Calu3 (cell line): ENCODE measurements at regions of chr1 and their contacts with region 1.

Region 1: DNA sequence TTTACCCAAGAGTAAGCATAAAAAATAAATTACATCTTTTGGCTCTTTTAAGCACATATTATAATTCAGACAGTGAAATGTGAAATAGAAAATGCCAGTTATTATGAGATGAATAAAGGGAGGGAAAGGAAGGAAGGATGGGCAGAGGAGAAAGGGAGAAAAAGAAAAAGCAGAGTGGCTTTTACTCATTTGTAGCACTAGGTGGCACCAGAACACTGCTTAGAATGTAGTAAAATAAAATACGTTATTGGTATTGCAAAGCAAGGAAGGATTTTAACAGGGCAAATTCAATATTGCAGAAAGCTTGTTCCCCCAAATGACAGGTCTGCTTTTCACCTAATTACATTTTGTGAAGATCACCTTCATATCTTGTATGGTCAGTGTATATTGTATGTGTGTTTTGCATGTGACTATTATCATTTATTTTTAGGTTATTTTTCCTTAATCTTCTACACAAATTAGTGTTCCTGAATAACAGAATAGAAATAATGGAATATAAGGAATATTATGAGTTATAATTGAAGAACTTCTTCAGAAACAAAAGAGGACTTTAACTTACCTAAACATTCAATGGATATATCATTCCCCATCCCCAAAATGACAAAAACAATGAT is 9.1 kb upstream of the PCNX2 start:
- DNase-seq: no peak
- H3K4me3 Mint-ChIP-seq: no peak overlapping the region
- H3K27ac Mint-ChIP-seq: no peak overlapping the region
- H3K4me1 Mint-ChIP-seq: peaks cover 8% of the 10 kb centered on the region
- H3K27me3 Mint-ChIP-seq: no peaks in the 10 kb centered on the region
- CTCF ChIP-seq: peak; percentile 67

Region 2: DNA sequence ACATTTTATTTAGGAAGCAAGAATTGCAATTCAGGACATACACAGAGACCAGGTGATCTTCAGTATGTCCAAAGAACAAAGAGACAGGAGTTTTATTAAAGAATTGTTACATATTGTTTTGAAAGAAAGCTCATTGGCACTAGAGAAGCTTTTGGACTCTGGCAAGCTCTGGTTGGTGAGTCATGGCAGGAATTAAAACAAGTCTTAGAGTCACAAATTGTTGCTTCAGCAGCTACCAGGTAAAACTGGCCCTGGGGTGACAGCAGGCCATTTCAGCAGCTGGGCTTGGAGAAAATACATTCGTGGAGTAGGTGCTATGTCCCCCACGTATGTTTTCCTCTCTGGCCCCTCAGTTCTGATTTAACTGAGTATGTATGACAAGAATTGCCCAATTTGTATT is 81.7 kb after region 1 on chr1:
- CTCF ChIA-PET with region 1: no interaction called
- intact Hi-C with region 1: loop called (anchors 2 kb)
- DNase-seq: no peak
- H3K4me3 Mint-ChIP-seq: no peak overlapping the region
- H3K27ac Mint-ChIP-seq: no peak overlapping the region
- H3K4me1 Mint-ChIP-seq: peaks cover 4% of the 10 kb centered on the region
- H3K27me3 Mint-ChIP-seq: no peaks in the 10 kb centered on the region
- CTCF ChIP-seq: no peak

Region 3: GRCh38 chr1:234065794-234066447 is 761.3 kb after region 1 on chr1:
- CTCF ChIA-PET with region 1: no interaction called
- intact Hi-C with region 1: loop called (anchors 2 kb)
- DNase-seq: peak; percentile 88
- H3K4me3 Mint-ChIP-seq: no peak overlapping the region
- H3K27ac Mint-ChIP-seq: no peak overlapping the region
- H3K4me1 Mint-ChIP-seq: no peaks in the 10 kb centered on the region
- H3K27me3 Mint-ChIP-seq: no peaks in the 10 kb centered on the region
- CTCF ChIP-seq: peak; percentile 91

Region 4: GRCh38 chr1:234114648-234115307 is 810.2 kb after region 1 on chr1:
- CTCF ChIA-PET with region 1: no interaction called
- intact Hi-C with region 1: loop called (anchors 5 kb)
- DNase-seq: peak; percentile 28
- H3K4me3 Mint-ChIP-seq: peak overlapping the region; percentile 40
- H3K27ac Mint-ChIP-seq: no peak overlapping the region
- H3K4me1 Mint-ChIP-seq: peaks cover 9% of the 10 kb centered on the region
- H3K27me3 Mint-ChIP-seq: peaks cover 7% of the 10 kb centered on the region
- CTCF ChIP-seq: peak; percentile 57